Breast epithelium (tissue), 4 donors: ENCODE measurements at regions of chr14 and their contacts with region 1.

Region 1: GRCh38 chr14:87688524-87688923 is 304.5 kb downstream of the GALC start:
- DNase-seq: no peak
- H3K4me3 ChIP-seq: no peak overlapping the region
- H3K27ac ChIP-seq: no peak overlapping the region
- H3K4me1 ChIP-seq: no peaks in the 10 kb centered on the region
- H3K27me3 ChIP-seq: no peaks in the 10 kb centered on the region
- CTCF ChIP-seq: no peak
- POLR2A ChIP-seq: no peak

Region 2: DNA sequence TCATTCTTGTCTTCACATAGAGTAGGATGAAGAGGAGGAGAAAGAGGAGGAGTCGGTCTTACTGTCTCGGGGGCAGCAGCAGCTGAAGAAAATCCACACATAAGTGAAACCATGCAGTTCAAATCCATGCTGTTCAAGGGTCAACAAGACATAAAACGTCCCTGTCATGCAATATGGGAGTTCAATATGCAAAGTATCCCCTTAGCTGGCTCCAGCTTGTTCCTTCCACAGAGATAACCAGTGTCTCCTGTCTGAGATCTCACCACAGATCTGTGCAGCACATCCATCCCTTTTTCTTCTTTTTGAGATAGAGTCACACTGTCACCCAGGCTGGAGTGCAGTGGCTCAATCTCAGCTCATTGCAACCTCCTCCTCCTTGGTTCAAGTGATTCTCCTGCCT is 53.1 kb before region 1 on chr14:
- intact Hi-C with region 1: loop called (anchors 2 kb)
- DNase-seq: no peak
- H3K4me3 ChIP-seq: no peak overlapping the region
- H3K27ac ChIP-seq: no peak overlapping the region
- H3K4me1 ChIP-seq: no peaks in the 10 kb centered on the region
- H3K27me3 ChIP-seq: no peaks in the 10 kb centered on the region
- CTCF ChIP-seq: no peak
- POLR2A ChIP-seq: no peak